ENCODE measurements at regions of chr3 and their contacts with region 1.

Region 1: GRCh38 chr3:49939858-49940666 is at the start of gene RBM6:
- DNase-seq: peak; percentile 98
- ATAC-seq: peak; percentile 98
- H3K4me3 Mint-ChIP-seq: peak within 1 kb of the TSS; percentile 98
- H3K27ac Mint-ChIP-seq: peak within 1 kb of the TSS; percentile 97
- H3K4me1 Mint-ChIP-seq: peaks cover 23% of the 10 kb centered on the region
- H3K27me3 Mint-ChIP-seq: no peaks in the 10 kb centered on the region
- total RNA-seq, gene RBM6: 108 to 142 TPM

Region 2: DNA sequence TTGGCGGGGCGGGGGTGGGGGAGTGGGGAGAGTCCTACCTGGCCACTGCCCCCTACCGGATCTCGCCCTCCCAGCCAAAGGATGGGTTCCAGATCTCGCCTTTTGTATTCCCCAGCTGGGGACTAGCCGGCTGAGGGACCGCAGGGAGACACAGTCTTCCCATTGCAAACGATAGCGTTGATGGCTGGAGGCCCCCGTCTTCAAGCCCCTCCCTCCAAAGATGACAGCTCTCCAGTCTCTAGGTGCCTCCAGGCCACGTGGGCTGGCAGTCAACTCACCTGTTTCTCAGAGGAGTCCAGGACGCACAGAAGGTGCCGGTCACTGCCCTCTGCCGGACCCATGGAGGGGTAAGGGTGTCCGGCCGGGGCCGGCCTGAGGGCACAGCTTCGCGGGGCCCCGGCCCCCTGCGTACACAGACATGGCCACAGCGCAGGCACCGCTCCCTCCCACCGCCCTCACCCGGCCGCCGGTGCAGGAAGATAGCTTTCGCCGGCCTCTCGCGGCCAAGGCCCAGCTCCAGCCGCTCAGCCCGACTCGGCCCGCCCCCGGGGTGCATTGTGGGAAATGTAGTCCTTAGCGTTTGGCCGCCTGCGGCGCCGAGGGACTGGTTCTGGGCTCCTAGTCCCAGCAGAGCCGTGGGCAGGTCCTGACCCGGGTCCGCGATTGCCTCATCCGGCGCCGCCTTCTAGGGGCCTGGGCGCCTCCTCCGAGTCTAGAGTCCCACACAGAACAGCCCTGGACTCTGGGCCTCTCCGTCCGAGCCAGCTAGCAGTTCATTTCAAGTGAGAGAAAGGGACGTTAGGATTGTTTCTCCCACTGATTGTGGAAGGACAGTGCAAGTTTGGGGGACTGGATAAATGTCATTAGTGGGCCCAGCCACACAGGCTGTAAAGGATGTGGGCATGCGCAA is 10.5 kb before region 1 on chr3 and contains the start of gene MON1A:
- CTCF ChIA-PET with region 1: interaction called, 13 read pairs
- DNase-seq: peak; percentile 92
- ATAC-seq: peak; percentile 99
- H3K4me3 Mint-ChIP-seq: peak within 1 kb of the TSS; percentile 82
- H3K27ac Mint-ChIP-seq: peak within 1 kb of the TSS; percentile 82
- H3K4me1 Mint-ChIP-seq: peaks cover 28% of the 10 kb centered on the region
- H3K27me3 Mint-ChIP-seq: no peaks in the 10 kb centered on the region
- total RNA-seq, gene MON1A: 13.0 to 15.8 TPM

Region 3: DNA sequence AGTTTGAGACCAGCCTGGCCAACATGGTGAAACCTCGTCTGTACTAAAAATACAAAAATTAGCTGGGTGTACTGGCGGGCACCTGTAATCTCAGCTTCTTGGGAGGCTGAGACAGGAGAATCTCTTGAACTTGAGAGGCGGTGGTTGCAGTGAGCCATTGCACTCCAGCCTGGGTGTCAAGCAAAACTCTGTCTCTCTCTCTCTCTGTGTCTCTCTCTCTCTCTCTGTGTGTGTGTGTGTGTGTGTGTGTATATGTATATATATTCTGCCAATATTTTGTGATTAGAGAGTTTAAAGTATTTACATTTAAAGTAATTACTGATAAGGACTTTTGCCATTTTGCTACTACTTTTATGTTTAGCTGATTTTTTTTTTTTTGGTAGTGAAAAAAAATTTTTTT is 15.6 kb after region 1 on chr3:
- CTCF ChIA-PET with region 1: no interaction called
- DNase-seq: no peak
- ATAC-seq: no peak
- H3K4me3 Mint-ChIP-seq: no peak overlapping the region
- H3K27ac Mint-ChIP-seq: no peak overlapping the region
- H3K4me1 Mint-ChIP-seq: peaks cover 14% of the 10 kb centered on the region
- H3K27me3 Mint-ChIP-seq: no peaks in the 10 kb centered on the region

Region 4: GRCh38 chr3:49998326-49998725 is 58.3 kb after region 1 on chr3:
- CTCF ChIA-PET with region 1: no interaction called
- DNase-seq: no peak
- ATAC-seq: no peak
- H3K4me3 Mint-ChIP-seq: no peak overlapping the region
- H3K27ac Mint-ChIP-seq: no peak overlapping the region
- H3K4me1 Mint-ChIP-seq: peaks cover 13% of the 10 kb centered on the region
- H3K27me3 Mint-ChIP-seq: no peaks in the 10 kb centered on the region

Measured in activated CD8-positive, alpha-beta memory T cell treated with anti-CD3 and anti-CD28 coated beads, Interleukin-2, amount 10 ng/mL, durations not matched to agents 7 days and 5 days (primary cell).